OCI-LY7 (cell line): ENCODE measurements at regions of chr9 and their contacts with region 1.

Region 1: GRCh38 chr9:76458903-76459690 is at the start of gene GCNT1:
- DNase-seq: peak; percentile 95
- H3K4me3 ChIP-seq: peak within 1 kb of the TSS; percentile 85
- H3K27ac ChIP-seq: peak within 1 kb of the TSS; percentile 92
- H3K4me1 ChIP-seq: peaks cover 52% of the 10 kb centered on the region
- CTCF ChIP-seq: peak; percentile 82
- total RNA-seq, gene GCNT1: 10.8 and 18.2 TPM in 2 replicates

Region 2: DNA sequence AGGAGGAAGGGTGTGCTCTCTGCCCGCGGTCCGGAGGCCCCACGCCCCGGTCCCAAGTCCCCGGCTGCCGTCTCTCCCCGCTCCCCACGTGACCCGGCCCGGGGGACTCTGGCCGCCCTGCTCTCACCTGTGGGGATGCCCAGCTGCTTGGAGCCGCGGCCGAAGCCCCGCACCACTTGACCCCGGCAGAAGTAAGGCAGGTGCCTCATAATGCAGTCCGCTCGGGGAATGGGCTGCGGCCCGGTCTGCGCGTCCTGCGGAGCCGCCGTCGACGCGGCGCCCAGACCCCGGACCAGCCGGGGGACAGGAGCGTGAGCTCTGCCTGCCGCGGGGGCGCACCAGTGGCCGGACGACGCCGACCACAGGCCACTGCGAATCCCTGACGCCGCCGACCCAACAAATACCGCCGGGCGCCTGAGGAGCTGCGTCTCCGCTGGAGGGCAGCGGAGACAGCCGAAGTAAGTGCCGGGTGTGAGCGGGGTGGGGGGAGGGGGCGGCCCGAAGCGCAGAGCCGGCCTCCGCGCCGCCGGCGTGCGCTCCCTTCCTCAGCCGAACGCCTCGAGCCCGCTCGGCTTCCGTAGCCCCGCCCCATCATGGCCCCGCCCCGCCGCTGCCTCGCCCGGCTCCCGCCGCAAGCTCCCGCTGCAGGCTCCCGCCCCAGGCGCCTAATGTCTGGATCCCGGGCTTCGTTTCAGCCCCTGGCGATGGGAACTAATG is 65.0 kb before region 1 on chr9 and contains the start of gene RFK:
- CTCF ChIA-PET with region 1: no interaction called
- POLR2A ChIA-PET with region 1: interaction called, 14 read pairs
- intact Hi-C with region 1: no loop called
- DNase-seq: peak; percentile 93
- H3K4me3 ChIP-seq: peak within 1 kb of the TSS; percentile 82
- H3K27ac ChIP-seq: peak within 1 kb of the TSS; percentile 77
- H3K4me1 ChIP-seq: peaks cover 24% of the 10 kb centered on the region
- CTCF ChIP-seq: peak; percentile 71
- total RNA-seq, gene RFK: 25.4 and 37.8 TPM in 2 replicates

Region 3: DNA sequence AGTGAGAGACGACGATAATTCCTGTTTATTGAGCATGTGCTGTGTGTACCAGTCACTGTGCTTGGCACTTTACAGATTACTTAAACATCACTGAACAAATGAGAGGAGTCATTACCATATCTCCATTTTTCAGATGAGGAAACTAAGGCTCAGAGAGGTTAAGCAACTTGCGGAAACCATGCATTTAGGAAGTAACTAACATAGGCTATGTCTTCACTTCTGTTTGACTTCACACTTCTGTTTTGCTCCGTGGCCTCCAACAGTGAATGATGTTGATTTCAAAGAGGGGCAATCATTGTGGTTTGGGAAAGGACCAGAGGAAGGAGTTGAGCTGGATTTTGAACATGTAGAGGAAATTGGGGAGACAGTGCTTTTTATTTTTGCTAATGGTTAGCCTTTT is 16.6 kb after region 1 on chr9:
- CTCF ChIA-PET with region 1: interaction called, 13 read pairs
- POLR2A ChIA-PET with region 1: interaction called, 84 read pairs
- intact Hi-C with region 1: loop called (anchors 1 kb)
- DNase-seq: no peak
- H3K4me3 ChIP-seq: peak overlapping the region; percentile 12
- H3K27ac ChIP-seq: peak overlapping the region; percentile 95
- H3K4me1 ChIP-seq: peaks cover 62% of the 10 kb centered on the region
- CTCF ChIP-seq: no peak

Region 4: GRCh38 chr9:76486151-76486550 is 27.1 kb after region 1 on chr9:
- CTCF ChIA-PET with region 1: no interaction called
- POLR2A ChIA-PET with region 1: interaction called, 11 read pairs
- intact Hi-C with region 1: no loop called
- DNase-seq: no peak
- H3K4me3 ChIP-seq: no peak overlapping the region
- H3K27ac ChIP-seq: no peak overlapping the region
- H3K4me1 ChIP-seq: peaks cover 15% of the 10 kb centered on the region
- CTCF ChIP-seq: no peak

Region 5: GRCh38 chr9:76562511-76562911 is 103.4 kb after region 1 on chr9:
- CTCF ChIA-PET with region 1: no interaction called
- POLR2A ChIA-PET with region 1: interaction called, 9 read pairs
- intact Hi-C with region 1: loop called (anchors 5 kb)
- DNase-seq: no peak
- H3K4me3 ChIP-seq: no peak overlapping the region
- H3K27ac ChIP-seq: peak overlapping the region; percentile 49
- H3K4me1 ChIP-seq: peaks cover 32% of the 10 kb centered on the region
- CTCF ChIP-seq: no peak

Region 6: DNA sequence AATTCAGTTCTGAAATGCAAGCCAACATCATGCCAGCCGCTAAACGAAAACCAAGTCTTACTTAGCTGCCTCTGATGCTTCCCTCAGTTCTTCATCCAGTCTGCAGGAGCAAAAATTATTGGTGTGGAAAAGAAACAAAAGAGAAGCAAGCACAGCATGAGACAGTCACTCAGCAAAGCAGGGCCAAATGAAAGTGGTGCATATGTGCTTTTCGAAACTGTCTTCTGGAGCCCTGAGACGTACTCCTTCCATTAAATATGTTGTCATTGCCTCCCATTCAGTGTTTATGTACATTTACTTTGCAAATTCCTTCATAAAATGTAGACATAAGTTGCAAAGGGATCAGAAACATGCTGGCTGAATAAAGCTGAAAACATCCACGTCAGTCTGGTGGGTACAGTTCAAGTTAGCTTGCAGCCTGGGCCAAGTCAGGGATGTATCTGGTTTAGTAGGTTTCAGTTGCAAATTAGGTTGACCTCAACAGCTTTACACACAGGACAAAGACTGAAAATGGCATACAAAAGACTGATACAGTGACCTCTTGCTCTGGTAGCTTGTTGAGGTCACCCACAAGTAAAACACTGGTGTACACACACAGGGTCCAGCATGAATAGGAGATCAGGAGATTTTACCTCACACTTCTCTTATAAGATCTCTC is 165.4 kb after region 1 on chr9:
- CTCF ChIA-PET with region 1: no interaction called
- POLR2A ChIA-PET with region 1: interaction called, 8 read pairs
- intact Hi-C with region 1: loop called (anchors 2 kb)
- DNase-seq: peak; percentile 29
- H3K4me3 ChIP-seq: no peak overlapping the region
- H3K27ac ChIP-seq: no peak overlapping the region
- H3K4me1 ChIP-seq: peaks cover 51% of the 10 kb centered on the region
- CTCF ChIP-seq: no peak

Region 7: GRCh38 chr9:76658535-76659231 is 199.6 kb after region 1 on chr9:
- CTCF ChIA-PET with region 1: interaction called, 5 read pairs
- POLR2A ChIA-PET with region 1: interaction called, 12 read pairs
- intact Hi-C with region 1: loop called (anchors 1 kb)
- DNase-seq: peak; percentile 78
- H3K4me3 ChIP-seq: no peak overlapping the region
- H3K27ac ChIP-seq: no peak overlapping the region
- H3K4me1 ChIP-seq: peaks cover 49% of the 10 kb centered on the region
- CTCF ChIP-seq: peak; percentile 95